Activated T-helper 1 cell treated with anti-CD3 and anti-CD28 coated beads, Interleukin-12 subunit alpha, Interleukin-12 subunit beta, Interleukin-2, Interleukin-4 antibody, amounts not matched to agents 30 ng/mL and 10 ng/mL and 1 ng/mL, durations not matched to agents 14 hours and 24 hours and 36 hours (primary cell): ENCODE measurements at regions of chr5 and their contacts with region 1.

Region 1: GRCh38 chr5:102583276-102584124 is 84.7 kb upstream of the SLCO6A1 start:
- DNase-seq: no peak
- H3K4me3 Mint-ChIP-seq: no peak overlapping the region
- H3K27ac Mint-ChIP-seq: no peak overlapping the region
- H3K4me1 Mint-ChIP-seq: no peaks in the 10 kb centered on the region
- H3K27me3 Mint-ChIP-seq: peaks cover 4% of the 10 kb centered on the region

Region 2: GRCh38 chr5:102277144-102277543 is 306.4 kb before region 1 on chr5:
- intact Hi-C with region 1: no loop called
- DNase-seq: no peak
- H3K4me3 Mint-ChIP-seq: no peak overlapping the region
- H3K27ac Mint-ChIP-seq: no peak overlapping the region
- H3K4me1 Mint-ChIP-seq: no peaks in the 10 kb centered on the region
- H3K27me3 Mint-ChIP-seq: peaks cover 5% of the 10 kb centered on the region

Region 3: GRCh38 chr5:102792705-102793104 is 209.2 kb after region 1 on chr5:
- intact Hi-C with region 1: loop called (anchors 1 kb)
- DNase-seq: no peak
- H3K4me3 Mint-ChIP-seq: no peak overlapping the region
- H3K27ac Mint-ChIP-seq: no peak overlapping the region
- H3K4me1 Mint-ChIP-seq: peaks cover 23% of the 10 kb centered on the region
- H3K27me3 Mint-ChIP-seq: no peaks in the 10 kb centered on the region